ENCODE measurements at regions of chr1 and their contacts with region 1.

Region 1: DNA sequence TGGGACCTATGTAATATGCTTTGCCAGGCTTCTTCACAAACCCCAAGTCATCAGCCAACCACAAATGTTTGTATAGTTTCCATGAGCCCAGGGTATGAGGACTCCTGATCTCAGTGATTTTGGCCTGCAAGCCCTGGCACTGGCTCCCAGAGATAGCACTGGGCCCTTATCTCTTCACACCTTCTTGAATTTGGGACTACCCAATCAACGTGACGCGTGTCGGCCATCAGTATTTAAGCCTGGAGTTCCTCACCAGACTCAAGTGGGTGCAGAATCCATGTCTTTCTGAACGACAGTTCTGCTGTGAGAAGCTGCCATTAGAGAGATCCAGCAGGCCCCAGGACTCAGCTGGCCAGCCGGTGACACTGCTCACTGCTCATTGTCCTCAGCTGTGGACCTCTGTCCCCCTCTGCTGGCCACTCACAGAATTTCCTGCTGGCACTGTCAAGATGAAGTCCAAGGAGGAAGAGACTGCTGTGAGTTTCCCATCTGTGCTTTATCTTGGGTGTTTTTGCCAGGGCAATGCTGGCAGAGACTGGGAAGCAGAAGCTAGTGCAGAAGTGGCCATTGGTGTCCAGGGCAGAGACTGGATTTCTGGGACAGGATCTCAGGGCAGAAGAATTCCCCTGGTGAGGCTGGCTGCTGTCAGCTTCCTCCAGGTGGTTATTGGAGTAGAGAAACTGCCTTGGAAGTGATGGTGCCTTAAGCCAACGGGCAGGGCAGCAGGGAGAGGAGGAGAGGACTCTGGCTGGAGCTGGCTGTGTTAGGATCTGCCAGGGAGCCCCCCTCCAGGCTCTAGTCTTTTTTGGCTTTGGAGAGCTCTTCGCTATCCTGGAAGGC is 28.4 kb downstream of the TMCC2 start:
- DNase-seq: peak; percentile 82
- ATAC-seq: peak; percentile 91 to 97
- H3K4me3 ChIP-seq: no peak overlapping the region
- H3K27ac ChIP-seq: peak overlapping the region in 1 of 2 experiments; percentile 51; a peak in 3 of 6 replicates
- H3K4me1 ChIP-seq: peaks cover 16% of the 10 kb centered on the region
- CTCF ChIP-seq: peak; percentile 95
- EP300 ChIP-seq: no peak
- POLR2A ChIP-seq: no peak
- RAD21 ChIP-seq: peak; percentile 97 to 100

Region 2: GRCh38 chr1:204975570-204976235 is 280.5 kb before region 1 on chr1:
- CTCF ChIA-PET with region 1: interaction called, 86 read pairs
- POLR2A ChIA-PET with region 1: no interaction called
- DNase-seq: peak; percentile 41 to 91
- ATAC-seq: peak; percentile 78 to 93
- H3K4me3 ChIP-seq: no peak overlapping the region
- H3K27ac ChIP-seq: no peak overlapping the region
- H3K4me1 ChIP-seq: peaks cover 12% of the 10 kb centered on the region
- CTCF ChIP-seq: peak; percentile 60
- EP300 ChIP-seq: no peak
- POLR2A ChIP-seq: no peak
- RAD21 ChIP-seq: peak; percentile 71 to 79

Region 3: GRCh38 chr1:205077158-205077933 is 178.8 kb before region 1 on chr1:
- CTCF ChIA-PET with region 1: interaction called, 19 read pairs
- POLR2A ChIA-PET with region 1: no interaction called
- DNase-seq: no peak
- ATAC-seq: no peak
- H3K4me3 ChIP-seq: no peak overlapping the region
- H3K27ac ChIP-seq: no peak overlapping the region
- H3K4me1 ChIP-seq: no peaks in the 10 kb centered on the region
- CTCF ChIP-seq: no peak
- EP300 ChIP-seq: no peak
- POLR2A ChIP-seq: no peak
- RAD21 ChIP-seq: no peak

Region 4: DNA sequence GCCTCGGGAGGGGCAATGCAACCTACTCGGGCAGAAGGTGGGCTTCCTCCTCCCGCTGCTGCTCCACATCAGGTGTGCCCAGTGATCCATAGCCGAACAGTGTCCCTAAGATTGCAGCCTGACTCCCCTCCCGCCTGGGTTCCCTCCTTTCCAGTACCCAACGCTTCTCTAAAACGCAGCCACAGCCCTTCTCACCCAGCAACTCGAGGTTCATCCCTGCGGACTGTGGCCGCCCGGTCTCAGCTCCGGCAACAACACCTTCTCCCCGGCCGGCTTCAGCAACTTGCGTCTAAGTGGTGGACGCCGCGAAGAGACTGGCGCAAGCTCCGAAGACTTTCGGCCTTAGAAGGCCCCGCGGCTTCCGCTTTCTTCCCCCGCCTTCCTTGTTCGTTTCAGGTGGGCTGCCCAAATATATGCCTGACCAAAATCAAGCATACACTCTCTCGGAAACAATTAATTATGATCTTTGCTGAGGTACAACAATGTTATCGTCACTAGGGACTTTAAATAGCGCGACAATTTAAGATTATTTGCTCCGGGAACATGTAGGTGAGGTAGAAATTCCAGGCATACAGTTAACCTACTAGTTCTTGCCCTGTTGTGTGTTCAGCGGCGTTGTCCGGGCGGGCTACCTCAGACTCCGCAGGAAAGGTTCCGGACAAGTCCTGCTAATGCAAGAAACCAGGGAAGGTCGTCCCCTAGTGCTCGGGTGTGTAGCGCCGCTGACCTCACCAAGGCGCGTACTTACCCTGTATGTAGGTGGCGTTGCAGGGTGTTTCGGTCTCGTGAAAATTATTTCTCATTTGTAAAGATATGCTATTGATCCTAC is 134.3 kb before region 1 on chr1 and contains the start of gene RBBP5:
- CTCF ChIA-PET with region 1: interaction called, 46 read pairs
- POLR2A ChIA-PET with region 1: interaction called, 4 read pairs
- DNase-seq: peak; percentile 98 to 99
- ATAC-seq: peak; percentile 100
- H3K4me3 ChIP-seq: peak within 1 kb of the TSS; percentile 92
- H3K27ac ChIP-seq: peak within 1 kb of the TSS; percentile 89 to 96
- H3K4me1 ChIP-seq: peaks cover 21% of the 10 kb centered on the region
- CTCF ChIP-seq: peak; percentile 88
- EP300 ChIP-seq: 0 out of 5 replicates have a peak, but pooled peaks of 1 of the 2 experiments have one; percentile 21
- POLR2A ChIP-seq: peak; percentile 86
- RAD21 ChIP-seq: peak; percentile 64 to 67
- polyA plus RNA-seq, gene RBBP5: 18.6 and 21.8 TPM in 2 replicates

Region 5: GRCh38 chr1:205162301-205162700 is 93.9 kb before region 1 on chr1:
- CTCF ChIA-PET with region 1: interaction called, 10 read pairs
- POLR2A ChIA-PET with region 1: no interaction called
- DNase-seq: no peak
- ATAC-seq: no peak
- H3K4me3 ChIP-seq: no peak overlapping the region
- H3K27ac ChIP-seq: no peak overlapping the region
- H3K4me1 ChIP-seq: no peaks in the 10 kb centered on the region
- CTCF ChIP-seq: no peak
- EP300 ChIP-seq: no peak
- POLR2A ChIP-seq: no peak
- RAD21 ChIP-seq: no peak

Region 6: GRCh38 chr1:205438213-205439157 is 182.3 kb after region 1 on chr1:
- CTCF ChIA-PET with region 1: no interaction called
- POLR2A ChIA-PET with region 1: no interaction called
- DNase-seq: peak; percentile 60 to 83
- ATAC-seq: peak; percentile 71 to 90; a peak in 5 of 6 replicates
- H3K4me3 ChIP-seq: no peak overlapping the region
- H3K27ac ChIP-seq: no peak overlapping the region
- H3K4me1 ChIP-seq: peaks cover 16% of the 10 kb centered on the region
- CTCF ChIP-seq: peak; percentile 22; the same call in 2 of the 3 replicates
- EP300 ChIP-seq: no peak
- POLR2A ChIP-seq: no peak
- RAD21 ChIP-seq: no peak

Region 7: DNA sequence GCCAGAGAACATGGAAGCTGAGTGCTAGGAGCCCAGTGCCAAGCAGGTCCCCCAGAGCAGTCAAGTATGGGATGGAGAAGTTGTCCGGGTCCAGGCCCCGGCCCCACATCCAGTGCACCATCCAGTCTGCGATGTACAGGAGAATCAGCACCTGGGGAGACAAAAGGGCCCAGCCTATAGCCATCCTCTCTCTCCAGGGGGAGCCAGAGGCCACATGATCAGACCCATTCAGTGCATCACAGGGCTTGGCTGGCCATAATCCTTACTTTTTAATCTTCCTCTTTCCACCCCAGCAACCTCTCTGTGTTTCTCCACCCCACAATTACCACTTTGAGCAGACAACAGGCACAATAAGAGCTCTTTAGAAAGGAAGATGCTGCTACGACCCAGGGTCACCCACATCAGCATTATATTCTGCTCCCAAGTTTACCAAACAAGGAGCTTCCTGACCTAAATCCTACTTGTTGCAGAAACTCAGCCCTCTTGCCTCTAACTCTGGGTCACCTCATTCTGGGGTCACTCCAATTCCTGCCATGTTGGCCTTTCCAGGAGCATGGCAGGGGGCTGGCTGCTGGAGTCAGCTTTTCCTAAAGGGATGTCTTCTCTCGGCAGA is 535.5 kb after region 1 on chr1:
- CTCF ChIA-PET with region 1: no interaction called
- POLR2A ChIA-PET with region 1: no interaction called
- DNase-seq: peak; percentile 49 to 83
- ATAC-seq: peak; percentile 96 to 99
- H3K4me3 ChIP-seq: no peak overlapping the region
- H3K27ac ChIP-seq: no peak overlapping the region
- H3K4me1 ChIP-seq: no peaks in the 10 kb centered on the region
- CTCF ChIP-seq: peak; percentile 90
- EP300 ChIP-seq: no peak
- POLR2A ChIP-seq: no peak
- RAD21 ChIP-seq: peak; percentile 95 to 98